GM12878 (cell line): ENCODE measurements at regions of chr18 and their contacts with region 1.

Region 1: GRCh38 chr18:8988261-8988871 is 114.1 kb upstream of the NDUFV2 start:
- DNase-seq: no peak
- ATAC-seq: peak; percentile 98
- H3K4me3 ChIP-seq: no peak overlapping the region
- H3K27ac ChIP-seq: no peak overlapping the region
- H3K4me1 ChIP-seq: peaks cover 3% of the 10 kb centered on the region
- H3K27me3 ChIP-seq: no peaks in the 10 kb centered on the region
- CTCF ChIP-seq: peak; percentile 89 to 91 (median 91); a peak in 5 of 6 replicates
- EP300 ChIP-seq: no peak
- POLR2A ChIP-seq: no peak
- RAD21 ChIP-seq: peak; percentile 91

Region 2: DNA sequence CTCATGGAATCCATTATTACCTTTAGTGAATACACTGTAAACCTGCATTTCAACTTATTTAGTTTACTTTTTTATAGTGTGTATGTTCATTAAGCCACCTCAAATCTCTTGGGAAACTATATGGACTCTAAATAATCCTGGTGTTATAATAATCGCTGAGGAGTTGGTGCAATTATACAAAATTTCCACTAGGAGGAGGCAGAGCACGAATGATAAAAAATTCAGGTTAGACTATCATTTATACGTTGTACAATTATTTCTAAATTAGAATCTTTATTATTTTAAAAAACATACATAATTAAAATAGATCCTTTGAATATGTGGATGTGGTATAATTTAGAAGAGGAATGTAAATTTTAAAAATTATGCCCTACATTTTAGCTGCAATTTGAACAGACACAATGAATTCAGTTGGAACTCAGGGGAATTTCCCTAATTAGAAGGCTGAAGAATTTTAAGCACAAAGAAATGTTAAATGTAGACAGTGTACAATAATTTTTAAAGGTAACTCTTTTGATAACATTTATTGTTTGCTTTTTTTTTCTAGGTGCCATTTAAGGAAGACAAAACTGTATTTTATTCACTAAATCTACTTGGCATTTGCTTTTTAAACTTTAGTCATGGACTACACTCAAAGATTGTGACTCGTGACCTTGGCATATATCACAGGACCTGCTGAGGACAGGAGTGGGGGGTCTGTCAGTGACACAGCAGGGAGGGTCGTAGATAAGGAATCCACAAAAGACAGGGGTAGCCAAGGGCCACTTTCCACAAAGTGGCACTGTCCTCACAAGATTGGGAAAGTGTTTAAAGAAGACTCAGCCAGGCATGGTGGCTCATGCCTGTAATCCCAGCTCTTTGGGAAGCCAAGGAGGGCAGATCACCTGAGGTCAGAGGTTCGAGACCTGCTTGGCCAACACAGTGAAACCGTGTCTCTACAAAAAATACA is 333.6 kb before region 1 on chr18:
- CTCF ChIA-PET with region 1: interaction called, 62 read pairs
- POLR2A ChIA-PET with region 1: no interaction called
- RAD21 ChIA-PET with region 1: interaction called, 15 read pairs
- SMC1A ChIA-PET with region 1: interaction called, 27 read pairs
- in situ Hi-C with region 1: loop called (anchors 5 kb)
- intact Hi-C with region 1: loop called (anchors 1 kb)
- DNase-seq: no peak
- ATAC-seq: peak; percentile 47; the same call in 1 of the 3 replicates
- H3K4me3 ChIP-seq: no peak overlapping the region
- H3K27ac ChIP-seq: no peak overlapping the region
- H3K4me1 ChIP-seq: no peaks in the 10 kb centered on the region
- H3K27me3 ChIP-seq: no peaks in the 10 kb centered on the region; a peak in 1 of 4 replicates
- CTCF ChIP-seq: peak; percentile 51 to 71 (median 70); a peak in 5 of 6 replicates
- EP300 ChIP-seq: no peak
- POLR2A ChIP-seq: no peak
- RAD21 ChIP-seq: peak; percentile 81

Region 3: GRCh38 chr18:8696749-8697211 is 291.6 kb before region 1 on chr18:
- CTCF ChIA-PET with region 1: interaction called, 56 read pairs
- POLR2A ChIA-PET with region 1: no interaction called
- RAD21 ChIA-PET with region 1: interaction called, 13 read pairs
- SMC1A ChIA-PET with region 1: interaction called, 16 read pairs
- in situ Hi-C with region 1: loop called (anchors 5 kb)
- intact Hi-C with region 1: loop called (anchors 1 kb)
- DNase-seq: no peak
- ATAC-seq: peak; percentile 95
- H3K4me3 ChIP-seq: no peak overlapping the region
- H3K27ac ChIP-seq: no peak overlapping the region
- H3K4me1 ChIP-seq: peaks cover 7% of the 10 kb centered on the region; the same call in 1 of the 2 replicates
- H3K27me3 ChIP-seq: peaks cover 0 to 3% of the 10 kb centered on the region in 2 experiments; a peak in 3 of 4 replicates
- CTCF ChIP-seq: peak; percentile 69 to 85 (median 82)
- EP300 ChIP-seq: no peak
- POLR2A ChIP-seq: no peak
- RAD21 ChIP-seq: peak; percentile 69

Region 4: DNA sequence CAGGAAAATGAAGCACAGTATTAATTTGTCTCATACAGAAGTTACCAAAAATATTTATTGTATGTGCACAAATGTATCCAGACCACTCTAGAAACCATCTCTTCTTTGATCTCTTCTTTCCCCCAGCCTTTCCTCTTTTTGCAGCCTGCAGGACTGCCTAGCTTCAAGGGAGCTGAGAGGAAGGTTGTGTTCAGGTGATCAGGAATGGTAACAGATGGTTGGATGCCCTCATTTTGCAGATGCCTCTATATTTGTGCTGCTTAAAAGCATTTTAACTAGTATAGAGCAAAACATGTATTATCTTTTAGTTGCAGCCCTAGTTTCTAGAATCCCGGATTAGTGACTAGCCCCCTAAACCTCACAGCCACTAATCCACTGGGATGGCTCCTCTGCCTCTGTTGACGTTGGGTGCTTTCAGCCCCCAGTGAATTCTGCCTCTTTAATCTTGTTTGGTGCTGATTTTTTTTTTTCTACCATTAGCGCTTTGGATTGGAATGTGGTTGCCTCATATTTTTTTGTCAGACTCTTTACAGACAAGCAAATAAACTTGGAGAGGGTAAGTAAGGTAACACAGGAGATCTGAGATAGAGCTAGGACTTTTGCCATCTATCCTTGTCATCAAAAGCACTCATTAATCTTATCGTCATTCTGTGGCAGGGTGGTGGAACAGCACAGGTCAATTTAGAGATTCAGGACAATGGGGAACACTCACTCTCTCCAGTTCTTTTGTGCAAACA is 10.3 kb after region 1 on chr18:
- CTCF ChIA-PET with region 1: interaction called, 20 read pairs
- POLR2A ChIA-PET with region 1: no interaction called
- RAD21 ChIA-PET with region 1: no interaction called
- SMC1A ChIA-PET with region 1: interaction called, 5 read pairs
- in situ Hi-C with region 1: no loop called
- intact Hi-C with region 1: no loop called
- DNase-seq: no peak
- ATAC-seq: no peak
- H3K4me3 ChIP-seq: no peak overlapping the region
- H3K27ac ChIP-seq: no peak overlapping the region
- H3K4me1 ChIP-seq: no peaks in the 10 kb centered on the region
- H3K27me3 ChIP-seq: no peaks in the 10 kb centered on the region; a peak in 1 of 4 replicates
- CTCF ChIP-seq: no peak
- EP300 ChIP-seq: no peak
- POLR2A ChIP-seq: no peak
- RAD21 ChIP-seq: no peak

Region 5: GRCh38 chr18:9153256-9153655 is 164.9 kb after region 1 on chr18:
- CTCF ChIA-PET with region 1: interaction called, 5 read pairs
- POLR2A ChIA-PET with region 1: no interaction called
- RAD21 ChIA-PET with region 1: interaction called, 3 read pairs
- SMC1A ChIA-PET with region 1: interaction called, 6 read pairs
- in situ Hi-C with region 1: loop called (anchors 10 kb)
- intact Hi-C with region 1: loop called (anchors 5 kb)
- DNase-seq: no peak
- ATAC-seq: no peak
- H3K4me3 ChIP-seq: no peak overlapping the region
- H3K27ac ChIP-seq: no peak overlapping the region
- H3K4me1 ChIP-seq: peaks cover 8% of the 10 kb centered on the region
- H3K27me3 ChIP-seq: no peaks in the 10 kb centered on the region
- CTCF ChIP-seq: no peak
- EP300 ChIP-seq: no peak
- POLR2A ChIP-seq: no peak
- RAD21 ChIP-seq: no peak

Region 6: GRCh38 chr18:9454061-9454703 is 465.8 kb after region 1 on chr18:
- CTCF ChIA-PET with region 1: no interaction called
- POLR2A ChIA-PET with region 1: no interaction called
- RAD21 ChIA-PET with region 1: no interaction called
- SMC1A ChIA-PET with region 1: no interaction called
- in situ Hi-C with region 1: no loop called
- intact Hi-C with region 1: no loop called
- DNase-seq: no peak
- ATAC-seq: no peak
- H3K4me3 ChIP-seq: no peak overlapping the region
- H3K27ac ChIP-seq: no peak overlapping the region
- H3K4me1 ChIP-seq: no peaks in the 10 kb centered on the region
- H3K27me3 ChIP-seq: no peaks in the 10 kb centered on the region
- CTCF ChIP-seq: no peak
- EP300 ChIP-seq: no peak
- POLR2A ChIP-seq: no peak
- RAD21 ChIP-seq: no peak